PC-3 (cell line): ENCODE measurements at regions of chr5 and their contacts with region 1.

Region 1: DNA sequence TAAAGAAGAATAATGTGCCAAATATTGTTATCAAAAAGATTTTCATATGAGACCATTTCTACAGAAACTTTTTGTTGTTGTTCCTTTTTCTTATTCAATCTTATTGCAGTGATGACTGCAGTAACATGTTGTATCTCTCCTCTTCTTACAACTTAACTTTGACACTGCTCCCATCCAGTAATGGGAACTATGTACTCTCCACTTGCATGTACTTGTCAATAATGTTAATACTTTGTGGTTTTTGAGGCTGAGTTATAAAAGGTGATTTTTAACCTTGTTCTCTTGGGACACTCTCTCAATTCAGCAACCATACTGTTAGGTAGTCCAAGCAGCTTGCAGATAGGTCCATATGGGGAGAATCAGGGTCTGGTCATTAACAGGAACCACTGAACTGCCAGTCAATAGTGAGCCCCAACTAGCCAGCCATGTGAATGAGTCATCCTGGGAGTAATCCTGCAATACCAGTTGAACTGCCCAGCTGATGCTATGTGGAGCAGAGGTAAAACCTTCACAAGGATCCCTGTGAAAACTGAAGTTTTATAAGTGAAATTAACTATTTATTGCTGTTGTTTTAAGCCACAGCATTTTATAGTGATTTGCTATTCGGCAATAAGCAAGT is 199.6 kb upstream of the DAB2 start:
- DNase-seq: peak; percentile 97
- ATAC-seq: peak; percentile 98
- H3K4me3 ChIP-seq: peak overlapping the region; percentile 54
- H3K27ac ChIP-seq: peak overlapping the region; percentile 87
- H3K4me1 ChIP-seq: peaks cover 27% of the 10 kb centered on the region
- H3K27me3 ChIP-seq: no peaks in the 10 kb centered on the region
- CTCF ChIP-seq: no peak

Region 2: DNA sequence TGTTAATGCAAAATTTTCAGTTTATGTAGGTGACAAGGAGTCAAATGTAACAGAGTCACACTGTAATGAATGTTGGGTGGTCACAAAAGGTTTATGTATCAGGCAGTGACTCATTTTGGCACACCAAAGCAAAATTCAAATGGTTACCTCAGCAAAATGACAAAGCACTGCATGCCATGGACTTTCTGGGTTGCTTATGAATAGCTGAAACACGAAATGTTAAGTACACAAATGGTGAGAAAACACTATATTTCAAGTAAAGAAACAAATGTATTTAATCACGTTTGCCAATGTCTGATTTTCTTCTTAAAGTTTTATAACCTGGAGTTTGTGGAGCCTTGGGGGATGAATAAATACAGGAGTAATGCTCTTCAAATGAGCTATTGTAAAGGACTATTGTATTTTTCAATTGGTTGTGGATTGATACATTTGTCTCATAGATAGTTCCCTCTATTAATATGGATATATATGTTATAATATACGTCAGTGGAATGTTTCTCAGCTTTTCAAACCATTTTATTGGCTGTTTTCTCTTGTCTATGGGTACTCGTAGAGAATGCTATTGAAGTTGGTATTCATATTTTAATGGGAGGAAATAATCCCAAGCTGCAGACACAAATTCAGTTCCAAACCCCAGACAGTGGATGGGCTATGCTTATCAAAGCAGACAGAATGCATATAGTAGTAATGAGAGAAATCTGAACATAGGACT is 17.9 kb before region 1 on chr5:
- CTCF ChIA-PET with region 1: no interaction called
- POLR2A ChIA-PET with region 1: no interaction called
- intact Hi-C with region 1: loop called (anchors 1 kb)
- DNase-seq: peak; percentile 92
- ATAC-seq: peak; percentile 92
- H3K4me3 ChIP-seq: no peak overlapping the region
- H3K27ac ChIP-seq: peak overlapping the region; percentile 71
- H3K4me1 ChIP-seq: peaks cover 24% of the 10 kb centered on the region
- H3K27me3 ChIP-seq: no peaks in the 10 kb centered on the region
- CTCF ChIP-seq: no peak